HEK293T (cell line): ENCODE measurements at regions of chr6 and their contacts with region 1.

Region 1: GRCh38 chr6:34791701-34792235 is at the start of gene BLTP3A:
- DNase-seq: peak; percentile 86

Region 2: GRCh38 chr6:34757687-34758274 is 34.0 kb before region 1 on chr6:
- CTCF ChIA-PET with region 1: interaction called, 3 read pairs
- POLR2A ChIA-PET with region 1: interaction called, 29 read pairs
- DNase-seq: no peak

Region 3: GRCh38 chr6:34771727-34772126 is 20.0 kb before region 1 on chr6:
- CTCF ChIA-PET with region 1: no interaction called
- POLR2A ChIA-PET with region 1: interaction called, 22 read pairs
- DNase-seq: no peak

Region 4: DNA sequence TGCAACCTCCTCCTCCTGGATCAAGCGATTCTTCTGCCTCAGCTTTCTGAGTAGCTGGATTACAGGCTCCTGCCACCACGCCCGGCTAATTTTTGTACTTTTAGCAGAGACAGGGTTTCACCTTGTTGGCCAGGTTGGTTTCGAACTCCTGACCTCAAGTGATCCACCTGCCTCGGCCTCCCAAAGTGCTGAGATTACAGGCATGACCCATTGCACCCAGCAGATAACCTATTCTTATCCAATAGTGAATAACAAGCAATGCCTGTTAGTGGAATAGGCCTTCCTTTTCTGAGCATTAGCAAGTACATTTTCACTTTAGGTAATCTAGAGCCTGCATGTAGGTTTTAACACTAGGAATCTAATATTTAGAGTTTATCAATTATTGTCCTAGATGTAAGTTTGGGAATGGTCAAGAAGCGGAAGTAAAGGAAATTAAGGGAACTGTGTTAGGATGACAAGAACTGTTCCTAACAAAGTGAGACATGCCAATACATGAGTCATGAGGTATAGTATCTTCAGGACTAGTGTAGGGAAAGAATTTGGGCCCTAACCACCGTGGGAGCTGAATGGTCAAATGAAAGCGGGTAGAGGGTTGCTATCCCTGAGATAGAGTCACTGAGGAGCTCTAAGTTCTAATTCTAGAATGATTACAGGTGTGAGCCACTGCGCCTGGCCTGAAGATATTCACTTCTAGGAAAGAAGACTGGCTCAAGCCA is 15.1 kb after region 1 on chr6:
- CTCF ChIA-PET with region 1: interaction called, 4 read pairs
- POLR2A ChIA-PET with region 1: interaction called, 30 read pairs
- DNase-seq: no peak